GM18951 (cell line): ENCODE measurements at regions of chr5 and their contacts with region 1.

Region 1: DNA sequence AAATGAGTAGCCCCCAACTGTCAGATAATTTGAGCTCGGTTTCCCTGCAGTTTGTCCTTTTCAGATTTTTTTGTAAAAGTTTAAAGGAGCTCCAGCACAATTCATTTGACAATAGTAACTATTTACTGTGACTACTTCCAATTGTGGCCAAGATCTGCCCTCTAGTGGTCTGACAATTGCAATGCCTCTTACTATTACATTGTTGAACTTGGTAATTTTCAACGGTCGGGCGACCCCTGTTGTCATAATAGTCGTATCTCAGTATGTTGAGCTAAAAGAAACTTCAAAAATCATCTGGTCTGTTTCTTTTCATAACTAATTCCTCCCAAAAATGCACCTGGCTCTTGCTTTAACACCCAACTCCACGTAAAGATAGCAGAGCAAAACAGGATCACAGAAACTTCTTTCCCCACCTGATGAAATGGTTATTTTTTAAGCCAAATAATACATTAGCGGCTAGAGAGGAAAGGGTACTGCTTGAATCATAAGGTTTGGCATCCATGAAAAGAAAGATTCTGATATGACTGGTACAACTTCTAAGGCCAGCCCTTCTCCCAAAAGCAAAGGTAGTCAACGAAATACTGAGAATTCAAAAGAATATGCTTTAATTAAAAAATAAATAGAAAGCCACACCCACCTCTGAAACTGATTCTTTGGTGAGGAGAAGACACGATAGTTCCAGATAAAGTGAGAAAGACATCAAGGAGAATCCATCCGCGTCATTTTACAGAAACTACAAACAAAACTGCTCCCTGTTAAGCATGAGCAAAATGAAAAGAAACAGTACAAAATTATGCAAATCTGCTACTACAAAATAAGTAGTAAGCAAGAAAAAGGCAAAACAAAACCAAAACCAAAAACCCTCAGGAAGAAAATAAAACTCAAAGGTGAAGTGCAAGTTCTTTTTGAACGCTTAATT is 76.9 kb upstream of the HTR4 start:
- POLR2A ChIP-seq: no peak

Region 2: GRCh38 chr5:148443998-148444397 is 287.2 kb before region 1 on chr5:
- in situ Hi-C with region 1: loop called (anchors 10 kb)
- POLR2A ChIP-seq: no peak

Region 3: GRCh38 chr5:148998174-148998797 is 267.1 kb after region 1 on chr5:
- in situ Hi-C with region 1: loop called (anchors 10 kb)
- POLR2A ChIP-seq: no peak